ENCODE measurements at regions of chr1 and their contacts with region 1.

Region 1: GRCh38 chr1:45303582-45304310 is 22.9 kb upstream of the HPDL start:
- DNase-seq: peak; percentile 96
- H3K4me3 ChIP-seq: peak overlapping the region; percentile 74
- H3K27ac ChIP-seq: peak overlapping the region; percentile 79
- H3K4me1 ChIP-seq: peaks cover 31% of the 10 kb centered on the region
- CTCF ChIP-seq: peak; percentile 83

Region 2: GRCh38 chr1:44721485-44722361 is 582.0 kb before region 1 on chr1:
- CTCF ChIA-PET with region 1: no interaction called
- POLR2A ChIA-PET with region 1: interaction called, 9 read pairs
- intact Hi-C with region 1: loop called (anchors 5 kb)
- DNase-seq: peak; percentile 97
- H3K4me3 ChIP-seq: no peak overlapping the region
- H3K27ac ChIP-seq: peak overlapping the region; percentile 89
- H3K4me1 ChIP-seq: peaks cover 64% of the 10 kb centered on the region
- CTCF ChIP-seq: no peak

Region 3: DNA sequence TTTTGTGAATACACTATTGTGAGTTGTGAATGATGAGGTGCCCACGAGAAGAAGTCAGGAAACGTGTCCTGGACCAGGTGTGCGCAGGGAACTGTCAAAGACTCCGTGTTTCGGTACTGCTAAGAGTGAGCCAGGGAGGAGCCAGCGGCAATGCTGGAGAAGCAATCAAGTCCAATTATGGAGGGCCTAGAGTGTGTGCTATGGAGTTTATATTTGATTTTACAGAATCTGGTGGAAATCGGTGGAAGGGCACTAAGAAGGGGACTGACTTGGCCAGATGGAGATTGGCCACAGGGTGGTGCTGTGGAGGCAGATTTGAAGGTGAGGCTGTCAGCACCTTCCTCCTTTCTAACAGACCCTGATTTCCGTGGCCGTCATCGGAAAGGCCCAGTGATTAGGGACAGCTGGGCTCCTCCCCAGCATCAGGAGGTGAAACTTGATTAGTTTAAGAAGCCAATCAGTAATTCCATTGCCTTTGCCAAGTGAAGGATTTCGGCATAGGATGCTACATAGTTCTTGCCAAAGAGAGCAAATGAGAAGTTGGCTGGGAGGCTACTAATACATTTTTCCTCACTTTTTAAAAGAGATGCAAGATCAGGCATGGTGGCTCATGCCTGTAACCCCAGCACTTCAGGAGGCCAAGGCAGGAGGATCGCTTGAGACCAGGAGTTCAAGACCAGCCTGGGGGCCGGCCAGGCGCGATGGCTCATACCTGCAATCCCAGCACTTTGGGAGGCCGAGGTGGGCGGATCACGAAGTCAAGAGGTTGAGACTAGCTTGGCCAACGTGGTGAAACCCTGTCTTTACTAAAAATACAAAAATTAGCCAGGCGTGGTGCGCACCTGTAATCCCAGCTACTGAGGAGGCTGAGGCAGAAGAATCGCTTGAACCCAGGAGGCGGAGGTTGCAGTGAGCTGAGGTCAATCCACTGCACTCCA is 467.7 kb before region 1 on chr1:
- CTCF ChIA-PET with region 1: no interaction called
- POLR2A ChIA-PET with region 1: no interaction called
- intact Hi-C with region 1: loop called (anchors 2 kb)
- DNase-seq: peak; percentile 77
- H3K4me3 ChIP-seq: no peak overlapping the region
- H3K27ac ChIP-seq: no peak overlapping the region
- H3K4me1 ChIP-seq: no peaks in the 10 kb centered on the region
- CTCF ChIP-seq: peak; percentile 94

Region 4: DNA sequence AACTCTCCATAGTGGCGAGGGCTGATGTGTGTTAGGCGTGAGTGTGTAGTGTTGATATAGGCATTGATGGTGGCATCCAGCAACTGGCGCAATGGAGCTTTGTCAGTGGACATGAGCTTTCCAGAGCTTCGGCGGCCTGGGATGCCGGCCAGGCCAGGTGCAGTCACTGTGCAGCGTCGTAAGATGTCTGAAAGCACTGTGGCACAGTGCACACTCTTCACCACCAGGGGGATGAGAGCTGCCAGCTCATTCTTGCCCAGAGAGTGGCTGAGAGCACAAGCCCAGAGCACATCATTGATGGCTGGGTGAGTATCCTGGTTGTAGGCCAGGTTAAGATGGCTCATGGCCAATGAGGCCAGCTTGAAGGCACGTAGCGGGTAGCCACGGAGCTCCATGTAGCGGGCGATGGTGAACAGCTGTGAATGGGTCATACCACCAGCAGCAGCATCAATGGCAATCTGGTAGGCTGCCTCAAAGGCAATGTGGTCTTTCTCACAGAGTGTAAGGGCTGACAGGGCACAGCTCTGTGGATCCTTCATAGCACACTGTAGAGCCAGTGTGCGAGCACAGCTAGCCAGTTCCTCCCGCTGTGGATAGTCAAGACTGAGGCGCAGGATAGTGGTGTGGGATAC is 285.0 kb before region 1 on chr1:
- CTCF ChIA-PET with region 1: interaction called, 6 read pairs
- POLR2A ChIA-PET with region 1: interaction called, 9 read pairs
- intact Hi-C with region 1: loop called (anchors 1 kb)
- DNase-seq: peak; percentile 72
- H3K4me3 ChIP-seq: no peak overlapping the region
- H3K27ac ChIP-seq: no peak overlapping the region
- H3K4me1 ChIP-seq: no peaks in the 10 kb centered on the region
- CTCF ChIP-seq: peak; percentile 81

Region 5: GRCh38 chr1:45326627-45327623 is 23.2 kb after region 1 on chr1 and contains the start of gene HPDL:
- CTCF ChIA-PET with region 1: interaction called, 7 read pairs
- POLR2A ChIA-PET with region 1: interaction called, 12 read pairs
- intact Hi-C with region 1: loop called (anchors 2 kb)
- DNase-seq: peak; percentile 84
- H3K4me3 ChIP-seq: peak within 1 kb of the TSS; percentile 71
- H3K27ac ChIP-seq: peak within 1 kb of the TSS; percentile 57
- H3K4me1 ChIP-seq: peaks cover 34% of the 10 kb centered on the region
- CTCF ChIP-seq: peak; percentile 43; the same call in 1 of the 2 replicates
- total RNA-seq, gene HPDL: 25.2 and 27.1 TPM in 2 replicates

Region 6: GRCh38 chr1:45490626-45491486 is 187.1 kb after region 1 on chr1 and contains the start of gene TESK2:
- CTCF ChIA-PET with region 1: interaction called, 16 read pairs
- POLR2A ChIA-PET with region 1: interaction called, 10 read pairs
- intact Hi-C with region 1: loop called (anchors 1 kb)
- DNase-seq: peak; percentile 100
- H3K4me3 ChIP-seq: peak within 1 kb of the TSS; percentile 75
- H3K27ac ChIP-seq: peak within 1 kb of the TSS; percentile 15
- H3K4me1 ChIP-seq: peaks cover 32% of the 10 kb centered on the region
- CTCF ChIP-seq: no peak
- total RNA-seq, gene TESK2: 4.9 and 5.0 TPM in 2 replicates

Region 7: GRCh38 chr1:45640293-45640692 is 336.5 kb after region 1 on chr1:
- CTCF ChIA-PET with region 1: no interaction called
- POLR2A ChIA-PET with region 1: no interaction called
- intact Hi-C with region 1: no loop called
- DNase-seq: no peak
- H3K4me3 ChIP-seq: no peak overlapping the region
- H3K27ac ChIP-seq: no peak overlapping the region
- H3K4me1 ChIP-seq: peaks cover 17% of the 10 kb centered on the region
- CTCF ChIP-seq: no peak

Measured in OCI-LY7 (cell line).